ENCODE measurements at regions of chr2 and their contacts with region 1.

Region 1: GRCh38 chr2:190880378-190881073 is at the start of gene GLS:
- DNase-seq: peak; percentile 97
- H3K4me3 ChIP-seq: peak within 1 kb of the TSS; percentile 74 to 93 (median 76)
- H3K27ac ChIP-seq: peak within 1 kb of the TSS; percentile 82
- H3K4me1 ChIP-seq: peaks cover 8% of the 10 kb centered on the region
- H3K27me3 ChIP-seq: no peaks in the 10 kb centered on the region
- CTCF ChIP-seq: no peak
- total RNA-seq, gene GLS: 166 to 403 TPM

Region 2: GRCh38 chr2:190722061-190722759 is 158.3 kb before region 1 on chr2:
- CTCF ChIA-PET with region 1: no interaction called
- dilution Hi-C with region 1: no loop called
- in situ Hi-C with region 1: no loop called
- intact Hi-C with region 1: no loop called
- DNase-seq: peak; percentile 57
- H3K4me3 ChIP-seq: no peak overlapping the region
- H3K27ac ChIP-seq: peak overlapping the region; percentile 29
- H3K4me1 ChIP-seq: peaks cover 41% of the 10 kb centered on the region
- H3K27me3 ChIP-seq: no peaks in the 10 kb centered on the region
- CTCF ChIP-seq: no peak

Region 3: DNA sequence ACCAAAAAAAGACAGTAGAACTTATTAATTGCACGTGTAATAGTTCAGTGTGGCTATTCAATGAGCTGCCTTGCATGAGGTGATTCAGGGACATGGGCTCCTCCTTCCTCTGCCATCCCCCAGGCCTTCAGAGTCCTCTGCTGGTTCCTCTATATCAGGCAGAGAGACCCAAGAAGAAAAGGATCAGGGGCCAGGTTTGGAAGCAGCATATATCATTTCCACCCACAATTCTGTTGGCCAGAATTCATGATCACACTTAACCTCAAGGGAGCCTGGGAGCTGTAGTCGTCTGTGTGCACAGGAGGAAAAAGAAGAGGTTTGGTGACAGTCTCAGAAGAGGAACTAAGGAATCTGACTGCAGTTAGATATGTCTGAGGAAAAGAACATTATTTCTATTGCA is 113.9 kb before region 1 on chr2:
- CTCF ChIA-PET with region 1: no interaction called
- dilution Hi-C with region 1: no loop called
- in situ Hi-C with region 1: no loop called
- intact Hi-C with region 1: no loop called
- DNase-seq: no peak
- H3K4me3 ChIP-seq: no peak overlapping the region
- H3K27ac ChIP-seq: peak overlapping the region; percentile 41
- H3K4me1 ChIP-seq: peaks cover 27% of the 10 kb centered on the region
- H3K27me3 ChIP-seq: no peaks in the 10 kb centered on the region
- CTCF ChIP-seq: peak in 1 of 2 donors; percentile 4

Region 4: GRCh38 chr2:190781604-190782198 is 98.8 kb before region 1 on chr2:
- CTCF ChIA-PET with region 1: no interaction called
- dilution Hi-C with region 1: no loop called
- in situ Hi-C with region 1: no loop called
- intact Hi-C with region 1: loop called (anchors 1 kb)
- DNase-seq: peak; percentile 43
- H3K4me3 ChIP-seq: no peak overlapping the region
- H3K27ac ChIP-seq: no peak overlapping the region
- H3K4me1 ChIP-seq: peaks cover 5% of the 10 kb centered on the region
- H3K27me3 ChIP-seq: no peaks in the 10 kb centered on the region
- CTCF ChIP-seq: peak; percentile 19 to 63

Region 5: GRCh38 chr2:190809876-190810525 is 70.5 kb before region 1 on chr2:
- CTCF ChIA-PET with region 1: no interaction called
- dilution Hi-C with region 1: no loop called
- in situ Hi-C with region 1: no loop called
- intact Hi-C with region 1: loop called (anchors 2 kb)
- DNase-seq: peak; percentile 86
- H3K4me3 ChIP-seq: no peak overlapping the region
- H3K27ac ChIP-seq: no peak overlapping the region
- H3K4me1 ChIP-seq: peaks cover 7% of the 10 kb centered on the region
- H3K27me3 ChIP-seq: no peaks in the 10 kb centered on the region
- CTCF ChIP-seq: no peak

Region 6: GRCh38 chr2:190849774-190850173 is 30.8 kb before region 1 on chr2:
- CTCF ChIA-PET with region 1: interaction called, 6 read pairs
- dilution Hi-C with region 1: no loop called
- in situ Hi-C with region 1: no loop called
- intact Hi-C with region 1: loop called (anchors 1 kb)
- DNase-seq: peak; percentile 89
- H3K4me3 ChIP-seq: no peak overlapping the region
- H3K27ac ChIP-seq: peak overlapping the region; percentile 41
- H3K4me1 ChIP-seq: peaks cover 41% of the 10 kb centered on the region
- H3K27me3 ChIP-seq: no peaks in the 10 kb centered on the region
- CTCF ChIP-seq: no peak

Region 7: GRCh38 chr2:190858817-190859216 is 21.7 kb before region 1 on chr2:
- CTCF ChIA-PET with region 1: no interaction called
- dilution Hi-C with region 1: no loop called
- in situ Hi-C with region 1: no loop called
- intact Hi-C with region 1: loop called (anchors 1 kb)
- DNase-seq: peak; percentile 82
- H3K4me3 ChIP-seq: peak overlapping the region in 2 of 3 experiments; percentile 9 to 20
- H3K27ac ChIP-seq: peak overlapping the region; percentile 85
- H3K4me1 ChIP-seq: peaks cover 65% of the 10 kb centered on the region
- H3K27me3 ChIP-seq: no peaks in the 10 kb centered on the region
- CTCF ChIP-seq: no peak

Region 8: GRCh38 chr2:191013932-191014652 is 133.6 kb after region 1 on chr2 and contains the start of gene STAT1:
- CTCF ChIA-PET with region 1: no interaction called
- dilution Hi-C with region 1: no loop called
- in situ Hi-C with region 1: no loop called
- intact Hi-C with region 1: loop called (anchors 5 kb)
- DNase-seq: peak; percentile 91
- H3K4me3 ChIP-seq: peak within 1 kb of the TSS; percentile 89 to 98 (median 96)
- H3K27ac ChIP-seq: peak within 1 kb of the TSS; percentile 86
- H3K4me1 ChIP-seq: peaks cover 14% of the 10 kb centered on the region
- H3K27me3 ChIP-seq: no peaks in the 10 kb centered on the region
- CTCF ChIP-seq: peak in 1 of 2 donors; percentile 18
- total RNA-seq, gene STAT1: 56.2 to 56.5 TPM